HEK293 (cell line): ENCODE measurements at regions of chr20 and their contacts with region 1.

Region 1: GRCh38 chr20:3158968-3159431 is 665 bp downstream of the FASTKD5 start:
- H3K4me3 ChIP-seq: peak overlapping the region; percentile 92
- H3K27ac ChIP-seq: peak overlapping the region; percentile 85
- H3K4me1 ChIP-seq: peaks cover 11% of the 10 kb centered on the region
- CTCF ChIP-seq: no peak

Region 2: DNA sequence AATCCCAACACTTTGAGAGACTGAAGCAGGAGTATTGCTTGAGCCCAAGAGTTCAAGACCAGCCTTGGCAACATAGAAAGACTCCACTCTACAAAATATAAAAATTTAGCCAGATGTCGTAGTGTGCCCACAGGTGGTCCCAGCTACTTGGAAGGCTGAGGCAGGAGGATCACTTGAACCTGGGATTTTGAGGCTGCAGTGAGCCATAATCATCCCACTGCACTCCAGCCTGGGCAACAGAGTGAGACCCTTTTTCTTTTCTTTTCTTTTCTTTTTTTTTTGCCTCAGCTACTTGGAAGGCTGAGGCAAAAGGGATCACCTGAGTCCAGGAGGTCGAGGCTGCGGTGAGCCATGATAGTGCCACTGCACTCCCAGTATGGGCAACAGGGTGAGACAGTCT is 17.2 kb before region 1 on chr20:
- CTCF ChIA-PET with region 1: no interaction called
- POLR2A ChIA-PET with region 1: interaction called, 14 read pairs
- H3K4me3 ChIP-seq: no peak overlapping the region
- H3K27ac ChIP-seq: no peak overlapping the region
- H3K4me1 ChIP-seq: no peaks in the 10 kb centered on the region
- CTCF ChIP-seq: no peak

Region 3: DNA sequence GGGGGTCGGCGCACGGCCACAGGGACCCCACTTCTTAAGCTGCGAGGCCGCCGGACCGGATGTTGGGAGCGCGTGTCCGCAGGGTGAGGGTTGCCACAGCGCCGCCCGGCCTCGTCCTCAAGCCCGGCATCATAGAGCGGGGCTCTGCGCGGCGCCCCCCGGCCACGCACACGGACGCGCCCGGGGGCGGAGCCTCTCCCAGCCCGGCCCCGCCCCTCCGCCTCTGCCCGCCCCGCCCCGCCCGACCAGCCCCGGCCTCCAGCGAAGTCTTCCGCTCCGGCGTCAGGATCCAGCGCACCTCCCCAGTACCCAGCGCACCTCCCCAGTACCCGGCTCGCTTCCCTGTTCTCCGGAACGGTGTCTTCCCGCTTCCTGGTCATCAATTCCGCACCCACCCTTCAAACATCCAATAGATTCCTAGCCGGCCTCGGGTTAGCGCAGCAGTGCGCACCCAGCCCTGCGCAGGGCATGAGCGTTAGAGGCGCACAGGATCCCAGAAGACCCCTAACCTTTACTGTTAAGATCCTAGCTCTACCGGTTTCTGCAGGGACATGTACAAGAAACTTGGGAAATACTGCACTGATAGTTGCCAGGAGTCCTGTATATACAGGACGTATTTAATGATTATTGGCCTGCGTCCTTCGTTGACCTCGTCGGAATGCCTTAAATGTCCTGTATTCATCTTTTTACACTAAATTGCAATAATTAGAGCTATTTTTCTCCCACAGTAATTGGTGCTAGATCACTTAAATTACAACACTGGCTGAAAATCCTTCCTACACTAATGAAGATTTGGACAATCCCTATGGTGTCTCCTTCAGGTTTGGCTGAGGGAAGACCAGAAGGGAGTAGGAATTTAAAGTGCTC is 249.0 kb after region 1 on chr20:
- CTCF ChIA-PET with region 1: no interaction called
- POLR2A ChIA-PET with region 1: interaction called, 13 read pairs
- H3K4me3 ChIP-seq: peak overlapping the region; percentile 84
- H3K27ac ChIP-seq: peak overlapping the region; percentile 64
- H3K4me1 ChIP-seq: peaks cover 19% of the 10 kb centered on the region
- CTCF ChIP-seq: no peak